Right ventricle myocardium inferior (tissue), 1 donor: ENCODE measurements at regions of chr4 and their contacts with region 1.

Region 1: GRCh38 chr4:89110986-89111832 is at the start of gene TIGD2:
- DNase-seq: peak; percentile 95
- ATAC-seq: peak; percentile 98
- total RNA-seq, gene TIGD2: 2.3 TPM

Region 2: GRCh38 chr4:88823058-88823919 is 287.9 kb before region 1 on chr4:
- intact Hi-C with region 1: loop called (anchors 5 kb)
- DNase-seq: peak; percentile 92
- ATAC-seq: peak; percentile 99

Region 3: DNA sequence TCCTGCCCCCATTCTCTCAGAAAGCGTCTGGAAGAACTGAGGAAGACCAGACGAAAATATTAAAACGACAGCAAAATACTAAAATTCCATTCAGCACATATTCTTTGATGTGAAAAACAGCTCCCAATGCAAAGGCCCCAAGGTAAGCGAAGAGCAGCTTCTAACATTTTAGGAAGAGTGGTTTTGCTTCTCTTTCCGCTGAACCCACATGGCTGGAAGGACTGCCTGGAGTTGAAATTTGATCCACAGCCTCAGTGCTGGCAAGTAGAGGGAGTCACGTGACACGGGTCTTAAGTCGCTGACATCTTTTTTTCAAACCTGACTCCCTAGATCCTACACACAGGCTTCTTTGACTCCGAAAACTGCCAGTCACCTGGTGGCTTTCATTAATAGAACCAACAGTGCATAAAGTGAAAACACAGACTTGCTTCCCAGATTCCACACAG is 54.2 kb before region 1 on chr4 and contains the start of gene FAM13A:
- intact Hi-C with region 1: loop called (anchors 2 kb)
- DNase-seq: peak; percentile 77
- ATAC-seq: peak; percentile 93
- total RNA-seq, gene FAM13A: 17.3 TPM

Region 4: GRCh38 chr4:89158884-89159503 is 47.8 kb after region 1 on chr4:
- intact Hi-C with region 1: loop called (anchors 2 kb)
- DNase-seq: no peak
- ATAC-seq: no peak

Region 5: DNA sequence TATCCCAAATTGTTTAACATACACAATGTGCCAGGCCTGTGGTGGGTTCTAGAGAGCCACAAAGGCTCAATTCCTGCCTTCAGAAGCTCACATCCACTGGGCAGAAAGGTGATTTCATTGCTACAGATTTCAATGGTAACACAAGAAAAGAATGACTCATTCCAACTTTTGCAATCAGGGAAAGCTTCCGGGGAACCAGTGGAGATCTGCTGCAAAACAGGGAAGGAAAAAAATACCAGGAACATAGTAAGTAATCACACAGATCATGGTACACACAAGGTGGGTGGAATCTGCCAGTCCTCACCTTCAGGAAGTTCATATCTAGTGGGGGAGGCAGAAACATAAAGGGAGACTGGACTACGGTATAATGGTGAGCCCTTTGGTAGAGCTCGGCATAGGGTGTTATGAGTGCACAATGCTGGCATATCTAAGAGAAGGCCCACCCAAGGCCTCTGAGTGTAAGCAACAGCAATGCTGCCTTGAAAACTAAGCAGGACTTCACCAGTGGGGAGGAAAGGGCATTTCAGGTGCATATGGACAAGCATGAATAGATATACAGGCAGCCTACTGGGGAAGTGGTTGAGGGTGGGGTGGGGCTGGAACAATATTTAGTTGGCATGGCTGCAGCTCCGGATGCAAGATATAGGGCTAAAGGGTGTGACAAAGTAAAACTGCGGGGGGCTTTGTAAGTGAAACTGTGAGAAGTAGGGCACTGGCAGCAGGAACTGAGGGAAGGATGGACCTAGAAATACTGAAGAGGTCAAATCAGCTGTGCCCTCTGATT is 172.2 kb after region 1 on chr4:
- intact Hi-C with region 1: no loop called
- DNase-seq: no peak
- ATAC-seq: no peak